Activated naive CD4-positive, alpha-beta T cell treated with anti-CD3 and anti-CD28 coated beads for 36 hours (primary cell): ENCODE measurements at regions of chr15 and their contacts with region 1.

Region 1: GRCh38 chr15:90994417-90995311 is at the start of gene PRC1:
- DNase-seq: peak; percentile 99
- H3K4me3 Mint-ChIP-seq: peak within 1 kb of the TSS; percentile 100
- H3K27ac Mint-ChIP-seq: peak within 1 kb of the TSS; percentile 98
- H3K4me1 Mint-ChIP-seq: peaks cover 24% of the 10 kb centered on the region
- H3K27me3 Mint-ChIP-seq: no peaks in the 10 kb centered on the region
- total RNA-seq, gene PRC1: 173 TPM

Region 2: GRCh38 chr15:90902040-90902839 is 92.4 kb before region 1 on chr15:
- CTCF ChIA-PET with region 1: no interaction called
- intact Hi-C with region 1: loop called (anchors 1 kb)
- DNase-seq: peak; percentile 84
- H3K4me3 Mint-ChIP-seq: peak overlapping the region; percentile 86
- H3K27ac Mint-ChIP-seq: peak overlapping the region; percentile 88
- H3K4me1 Mint-ChIP-seq: peaks cover 27% of the 10 kb centered on the region
- H3K27me3 Mint-ChIP-seq: no peaks in the 10 kb centered on the region

Region 3: DNA sequence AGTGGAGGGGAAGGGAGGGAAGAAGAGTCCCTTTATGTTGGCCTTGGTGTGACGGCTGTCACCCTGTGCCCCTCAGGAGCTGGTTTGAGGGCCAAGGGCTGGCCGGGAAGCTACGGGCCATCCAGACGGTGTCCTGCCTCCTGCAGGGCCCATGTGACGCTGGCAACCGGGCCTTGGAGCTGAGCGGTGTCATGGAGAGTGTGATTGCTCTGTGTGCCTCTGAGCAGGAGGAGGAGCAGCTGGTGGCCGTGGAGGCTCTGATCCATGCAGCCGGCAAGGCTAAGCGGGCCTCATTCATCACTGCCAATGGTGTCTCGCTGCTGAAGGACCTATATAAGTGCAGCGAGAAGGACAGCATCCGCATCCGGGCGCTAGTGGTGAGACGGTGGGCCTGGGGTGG is 48.1 kb before region 1 on chr15:
- CTCF ChIA-PET with region 1: no interaction called
- intact Hi-C with region 1: no loop called
- DNase-seq: no peak
- H3K4me3 Mint-ChIP-seq: no peak overlapping the region
- H3K27ac Mint-ChIP-seq: no peak overlapping the region
- H3K4me1 Mint-ChIP-seq: no peaks in the 10 kb centered on the region
- H3K27me3 Mint-ChIP-seq: no peaks in the 10 kb centered on the region

Region 4: GRCh38 chr15:91022075-91022835 is 27.6 kb after region 1 on chr15 and contains the start of gene VPS33B:
- CTCF ChIA-PET with region 1: no interaction called
- intact Hi-C with region 1: loop called (anchors 1 kb)
- DNase-seq: peak; percentile 88
- H3K4me3 Mint-ChIP-seq: peak within 1 kb of the TSS; percentile 87
- H3K27ac Mint-ChIP-seq: peak within 1 kb of the TSS; percentile 89
- H3K4me1 Mint-ChIP-seq: peaks cover 34% of the 10 kb centered on the region
- H3K27me3 Mint-ChIP-seq: no peaks in the 10 kb centered on the region
- total RNA-seq, gene VPS33B: 19.8 to 21.2 TPM

Region 5: DNA sequence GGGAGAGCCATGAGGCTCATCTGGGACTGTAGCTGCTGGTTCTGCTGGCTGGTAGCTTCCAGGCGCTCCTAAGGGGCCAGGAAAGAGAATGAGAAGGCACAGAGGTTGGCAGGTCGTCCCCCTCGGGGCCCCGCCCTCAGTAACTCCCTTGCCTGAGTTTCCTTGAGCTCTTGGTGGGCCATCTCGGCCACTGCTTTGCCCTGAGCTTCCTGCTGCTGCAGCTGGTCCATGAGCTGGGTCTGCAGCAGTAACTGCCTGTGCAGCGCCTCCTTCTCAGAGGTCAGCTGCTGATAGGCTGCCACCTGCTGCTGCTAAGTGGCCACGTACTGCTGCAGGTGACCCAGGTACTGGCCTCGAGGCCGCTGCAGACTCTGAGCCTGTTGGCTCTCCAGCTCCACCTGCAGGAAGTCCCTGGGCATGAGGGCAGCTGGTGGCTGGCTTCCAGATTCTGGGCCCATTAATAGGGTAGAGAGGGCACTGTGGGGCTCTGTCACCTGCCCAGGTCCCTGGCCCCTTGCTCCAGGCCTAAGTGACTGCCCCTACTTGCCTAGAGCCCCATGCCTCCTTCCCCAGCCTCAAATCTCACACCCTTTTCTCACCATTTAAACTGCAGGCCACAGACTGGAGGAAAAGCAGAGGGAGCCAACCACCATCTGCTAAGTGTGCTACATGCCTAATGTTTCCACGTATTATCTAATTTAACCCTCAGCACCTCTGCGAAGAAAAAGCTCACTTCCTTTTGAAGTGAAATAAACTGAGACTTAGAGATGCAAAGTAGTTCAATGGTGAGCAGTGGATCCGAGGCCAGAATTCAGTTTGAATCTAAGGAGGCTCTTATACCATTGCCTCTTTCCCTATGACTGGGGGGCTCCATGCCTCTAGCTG is 38.5 kb after region 1 on chr15:
- CTCF ChIA-PET with region 1: interaction called, 3 read pairs
- intact Hi-C with region 1: loop called (anchors 1 kb)
- DNase-seq: peak; percentile 79
- H3K4me3 Mint-ChIP-seq: no peak overlapping the region
- H3K27ac Mint-ChIP-seq: no peak overlapping the region
- H3K4me1 Mint-ChIP-seq: no peaks in the 10 kb centered on the region
- H3K27me3 Mint-ChIP-seq: no peaks in the 10 kb centered on the region